Colonic mucosa (tissue), 4 donors: ENCODE measurements at regions of chr17 and their contacts with region 1.

Region 1: GRCh38 chr17:2854519-2855055 is 58.3 kb downstream of the RAP1GAP2 start:
- DNase-seq: peak; percentile 37
- H3K4me3 ChIP-seq: peak overlapping the region; percentile 51
- H3K27ac ChIP-seq: no peak overlapping the region
- H3K4me1 ChIP-seq: peaks cover 8% of the 10 kb centered on the region
- H3K27me3 ChIP-seq: no peaks in the 10 kb centered on the region
- CTCF ChIP-seq: no peak

Region 2: GRCh38 chr17:2837147-2837561 is 17.4 kb before region 1 on chr17:
- intact Hi-C with region 1: no loop called
- DNase-seq: no peak
- H3K4me3 ChIP-seq: no peak overlapping the region
- H3K27ac ChIP-seq: no peak overlapping the region
- H3K4me1 ChIP-seq: no peaks in the 10 kb centered on the region
- H3K27me3 ChIP-seq: no peaks in the 10 kb centered on the region
- CTCF ChIP-seq: no peak

Region 3: DNA sequence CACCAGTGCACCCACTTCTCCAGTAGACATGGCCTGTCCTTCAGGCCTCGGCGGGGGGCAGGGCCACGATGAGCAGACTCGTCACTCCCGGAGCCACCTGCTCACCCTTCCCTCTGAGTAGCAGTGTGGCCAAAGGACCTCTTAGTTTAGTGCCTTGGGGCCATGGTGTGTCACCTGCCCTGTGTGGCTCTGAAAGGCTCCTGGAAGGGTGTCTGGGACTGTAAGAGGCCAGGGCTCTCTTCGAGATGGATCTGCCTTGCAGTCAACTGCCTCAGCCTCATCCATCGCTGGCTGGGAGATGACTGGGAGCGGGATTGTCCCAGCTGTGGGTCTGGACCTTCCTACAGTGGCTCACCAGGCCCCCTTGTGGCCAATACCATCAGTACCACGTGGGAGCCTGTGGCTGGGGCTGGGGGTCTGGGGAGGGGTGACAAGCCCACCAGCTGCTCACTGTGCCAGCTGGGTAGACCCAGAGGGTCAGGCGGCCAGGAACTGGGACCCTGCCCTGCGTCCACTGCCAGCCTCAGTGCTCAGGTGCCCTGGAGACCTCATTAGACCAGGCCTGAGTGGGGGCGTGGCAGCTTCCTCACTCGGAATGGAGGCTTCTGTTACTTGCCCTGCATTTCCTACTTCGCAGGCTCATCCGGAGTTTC is 75.4 kb after region 1 on chr17:
- intact Hi-C with region 1: loop called (anchors 5 kb)
- DNase-seq: peak; percentile 68
- H3K4me3 ChIP-seq: no peak overlapping the region
- H3K27ac ChIP-seq: peak overlapping the region; percentile 15
- H3K4me1 ChIP-seq: no peaks in the 10 kb centered on the region
- H3K27me3 ChIP-seq: no peaks in the 10 kb centered on the region
- CTCF ChIP-seq: peak; percentile 86